ENCODE measurements at regions of chr12 and their contacts with region 1.

Region 1: GRCh38 chr12:23455283-23455682 is 494.2 kb downstream of the SOX5 start:
- DNase-seq: no peak
- H3K4me3 ChIP-seq: no peak overlapping the region
- H3K27ac ChIP-seq: no peak overlapping the region
- H3K4me1 ChIP-seq: no peaks in the 10 kb centered on the region
- H3K27me3 ChIP-seq: no peaks in the 10 kb centered on the region
- CTCF ChIP-seq: no peak
- EP300 ChIP-seq: no peak
- POLR2A ChIP-seq: no peak

Region 2: GRCh38 chr12:23415180-23415579 is 40.1 kb before region 1 on chr12:
- in situ Hi-C with region 1: no loop called
- intact Hi-C with region 1: loop called (anchors 1 kb)
- DNase-seq: no peak
- H3K4me3 ChIP-seq: no peak overlapping the region
- H3K27ac ChIP-seq: no peak overlapping the region
- H3K4me1 ChIP-seq: no peaks in the 10 kb centered on the region
- H3K27me3 ChIP-seq: no peaks in the 10 kb centered on the region
- CTCF ChIP-seq: no peak
- EP300 ChIP-seq: no peak
- POLR2A ChIP-seq: no peak